ENCODE measurements at regions of chr5 and their contacts with region 1.

Region 1: DNA sequence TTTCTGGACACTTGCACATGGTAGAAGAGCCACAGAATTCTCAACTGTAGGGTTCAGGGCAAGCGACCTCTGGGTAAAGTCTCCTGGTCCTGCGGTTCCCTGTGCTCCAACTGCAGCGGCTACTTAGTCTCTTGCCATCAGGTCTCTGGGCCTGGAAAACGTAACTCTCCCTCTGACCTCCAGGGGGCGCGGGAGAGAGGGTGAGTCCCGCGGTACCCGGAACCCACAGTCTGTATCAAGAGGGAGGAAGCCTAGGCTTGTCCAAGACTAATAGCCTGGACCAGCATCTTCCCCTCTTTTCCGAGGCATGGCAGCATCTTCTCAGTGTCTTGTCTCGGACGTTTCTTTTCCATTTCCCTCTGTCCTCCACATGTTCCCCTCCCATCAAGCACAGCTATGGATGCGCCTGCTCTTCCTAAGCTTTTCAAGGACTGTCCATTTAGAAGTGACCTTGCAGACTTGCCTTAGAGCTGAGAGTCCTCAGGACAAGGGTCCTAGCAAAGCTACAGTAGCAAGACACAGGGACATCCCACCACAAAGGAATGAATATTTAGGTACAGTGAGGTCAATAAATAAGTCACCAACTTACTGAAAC is 59.3 kb downstream of the FSTL4 start:
- DNase-seq: peak in 4 of 5 donors; percentile 26 to 34 (median 29)
- H3K4me3 ChIP-seq: no peak overlapping the region
- H3K4me3 Mint-ChIP-seq: no peak overlapping the region
- H3K27ac ChIP-seq: no peak overlapping the region
- H3K27ac Mint-ChIP-seq: no peak overlapping the region
- H3K4me1 ChIP-seq: no peaks in the 10 kb centered on the region
- H3K4me1 Mint-ChIP-seq: no peaks in the 10 kb centered on the region
- H3K27me3 ChIP-seq: peaks cover 6% of the 10 kb centered on the region
- H3K27me3 Mint-ChIP-seq: peaks cover 18 to 30% of the 10 kb centered on the region in 2 donors

Region 2: DNA sequence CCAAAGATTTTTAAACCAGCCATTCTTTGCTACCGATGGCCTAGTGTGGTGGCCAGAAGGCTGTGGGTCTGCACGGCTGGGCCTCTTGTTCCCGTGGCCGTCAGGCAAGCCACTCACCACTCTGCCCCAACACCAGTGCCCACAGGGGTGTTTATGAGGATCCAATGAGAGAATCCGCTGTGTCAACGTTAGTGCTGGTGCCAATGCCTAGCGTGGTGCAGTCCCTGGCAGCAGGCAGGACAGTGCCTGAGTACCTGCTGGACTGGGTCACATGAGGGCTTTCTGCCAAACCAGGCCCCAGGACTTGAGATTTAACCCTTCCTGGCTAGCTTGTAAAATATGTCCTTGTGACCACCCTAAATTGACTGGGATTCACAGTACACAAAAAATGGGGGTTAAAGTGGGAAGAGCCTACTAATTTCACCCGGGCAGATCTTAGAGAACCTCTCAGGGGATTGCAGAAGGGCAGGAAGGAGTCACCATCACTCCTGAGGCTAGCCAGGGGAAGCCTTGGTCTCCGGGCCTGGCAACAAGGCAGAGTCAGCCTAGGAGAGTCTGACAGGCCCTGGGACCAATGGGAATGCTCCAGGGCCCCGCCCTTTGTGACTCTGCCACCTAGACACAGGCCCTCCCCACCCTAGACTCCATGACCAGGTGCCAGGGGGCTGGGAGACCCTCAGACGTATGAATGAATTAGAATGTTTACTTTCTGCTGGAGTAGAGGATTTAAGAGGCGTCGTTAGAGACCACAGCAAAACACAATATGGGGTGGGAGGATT is 122.5 kb after region 1 on chr5:
- CTCF ChIA-PET with region 1: no interaction called
- POLR2A ChIA-PET with region 1: no interaction called
- intact Hi-C with region 1: no loop called
- DNase-seq: no peak
- H3K4me3 ChIP-seq: no peak overlapping the region
- H3K4me3 Mint-ChIP-seq: no peak overlapping the region
- H3K27ac ChIP-seq: no peak overlapping the region
- H3K27ac Mint-ChIP-seq: no peak overlapping the region
- H3K4me1 ChIP-seq: no peaks in the 10 kb centered on the region
- H3K4me1 Mint-ChIP-seq: no peaks in the 10 kb centered on the region
- H3K27me3 ChIP-seq: no peaks in the 10 kb centered on the region
- H3K27me3 Mint-ChIP-seq: peaks cover 11 to 20% of the 10 kb centered on the region in 2 donors

Region 3: GRCh38 chr5:133868946-133869518 is 316.0 kb after region 1 on chr5:
- CTCF ChIA-PET with region 1: interaction called, 10 read pairs
- POLR2A ChIA-PET with region 1: no interaction called
- intact Hi-C with region 1: no loop called
- DNase-seq: peak; percentile 46 to 58 (median 51)
- H3K4me3 ChIP-seq: no peak overlapping the region
- H3K4me3 Mint-ChIP-seq: peak overlapping the region in 1 of 8 donors; percentile 30
- H3K27ac ChIP-seq: no peak overlapping the region
- H3K27ac Mint-ChIP-seq: no peak overlapping the region
- H3K4me1 ChIP-seq: no peaks in the 10 kb centered on the region
- H3K4me1 Mint-ChIP-seq: peaks cover 0 to 3% (median under 1%) of the 10 kb centered on the region in 4 donors
- H3K27me3 ChIP-seq: no peaks in the 10 kb centered on the region
- H3K27me3 Mint-ChIP-seq: peaks cover 5 to 16% of the 10 kb centered on the region in 2 donors